ENCODE measurements at regions of chr1 and their contacts with region 1.

Region 1: GRCh38 chr1:150168960-150169601 is 19.4 kb downstream of the PLEKHO1 start:
- DNase-seq: peak; percentile 79 to 87 (median 82)
- ATAC-seq: peak; percentile 81
- H3K4me3 ChIP-seq: no peak overlapping the region
- H3K27ac ChIP-seq: no peak overlapping the region
- H3K4me1 ChIP-seq: peaks cover 7 to 27% of the 10 kb centered on the region in 2 experiments; a peak in 4 of 5 replicates
- H3K27me3 ChIP-seq: no peaks in the 10 kb centered on the region
- CTCF ChIP-seq: peak; percentile 91 to 93 (median 91)
- EP300 ChIP-seq: no peak
- POLR2A ChIP-seq: no peak
- RAD21 ChIP-seq: peak; percentile 89 to 97

Region 2: GRCh38 chr1:149962123-149962548 is 206.9 kb before region 1 on chr1:
- CTCF ChIA-PET with region 1: interaction called, 5 read pairs
- POLR2A ChIA-PET with region 1: no interaction called
- in situ Hi-C with region 1: loop called (anchors 5 kb)
- intact Hi-C with region 1: loop called (anchors 1 kb)
- DNase-seq: peak; percentile 52 to 79 (median 70)
- ATAC-seq: peak; percentile 96
- H3K4me3 ChIP-seq: no peak overlapping the region
- H3K27ac ChIP-seq: no peak overlapping the region
- H3K4me1 ChIP-seq: no peaks in the 10 kb centered on the region
- H3K27me3 ChIP-seq: no peaks in the 10 kb centered on the region
- CTCF ChIP-seq: peak; percentile 70 to 85 (median 77)
- EP300 ChIP-seq: no peak
- POLR2A ChIP-seq: no peak
- RAD21 ChIP-seq: peak; percentile 87 to 90

Region 3: DNA sequence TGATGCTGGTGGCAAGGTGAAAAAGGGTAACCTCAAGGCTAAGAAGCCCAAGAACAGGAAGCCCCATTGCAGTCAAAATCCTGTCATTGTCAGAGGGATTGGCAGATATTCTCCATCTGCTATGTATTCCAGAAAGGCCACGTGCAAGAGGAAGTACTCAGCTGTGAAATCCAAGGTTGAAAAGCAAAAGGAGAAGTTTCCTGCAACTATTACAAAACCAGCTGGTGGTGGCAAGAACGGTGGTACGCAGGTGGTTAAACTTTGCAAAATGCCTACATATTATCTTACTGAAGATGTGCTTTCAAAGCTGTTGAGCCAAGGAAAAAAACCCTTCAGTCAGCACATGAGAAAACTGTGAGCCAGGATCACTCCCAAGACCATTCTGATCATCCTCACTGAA is 115.2 kb before region 1 on chr1:
- CTCF ChIA-PET with region 1: no interaction called
- POLR2A ChIA-PET with region 1: no interaction called
- in situ Hi-C with region 1: no loop called
- intact Hi-C with region 1: loop called (anchors 5 kb)
- DNase-seq: no peak
- ATAC-seq: no peak
- H3K4me3 ChIP-seq: no peak overlapping the region
- H3K27ac ChIP-seq: no peak overlapping the region
- H3K4me1 ChIP-seq: no peaks in the 10 kb centered on the region; a peak in 1 of 5 replicates
- H3K27me3 ChIP-seq: no peaks in the 10 kb centered on the region
- CTCF ChIP-seq: no peak
- EP300 ChIP-seq: no peak
- POLR2A ChIP-seq: no peak
- RAD21 ChIP-seq: no peak

Region 4: DNA sequence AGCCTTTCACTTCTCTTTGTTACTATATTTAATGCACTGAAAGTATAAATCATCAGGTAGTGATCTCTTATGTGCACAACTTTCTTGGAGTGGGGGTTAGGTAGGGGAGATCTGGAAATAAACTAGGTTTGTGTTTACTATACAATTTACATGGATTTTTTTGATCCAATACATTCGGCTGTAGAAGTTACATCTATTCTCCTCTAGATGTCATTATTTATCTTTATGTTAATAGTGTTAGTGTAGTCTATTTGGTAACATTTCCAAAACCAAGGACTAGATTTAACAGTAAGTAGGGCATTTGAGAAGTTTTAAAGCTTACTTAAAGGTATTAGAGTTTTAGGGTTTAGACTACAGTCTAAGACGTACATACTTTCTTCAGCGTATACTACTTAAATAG is 96.1 kb before region 1 on chr1:
- CTCF ChIA-PET with region 1: interaction called, 32 read pairs
- POLR2A ChIA-PET with region 1: interaction called, 5 read pairs
- in situ Hi-C with region 1: loop called (anchors 5 kb)
- intact Hi-C with region 1: loop called (anchors 1 kb)
- DNase-seq: no peak
- ATAC-seq: peak; percentile 62
- H3K4me3 ChIP-seq: no peak overlapping the region
- H3K27ac ChIP-seq: no peak overlapping the region
- H3K4me1 ChIP-seq: peaks cover 0 to 15% of the 10 kb centered on the region in 2 experiments; a peak in 2 of 5 replicates
- H3K27me3 ChIP-seq: no peaks in the 10 kb centered on the region
- CTCF ChIP-seq: peak in 1 of 3 experiments; percentile 67; a peak in 4 of 6 replicates
- EP300 ChIP-seq: no peak
- POLR2A ChIP-seq: no peak
- RAD21 ChIP-seq: peak; percentile 69 to 79

Region 5: GRCh38 chr1:150089846-150090520 is 79.1 kb before region 1 on chr1:
- CTCF ChIA-PET with region 1: no interaction called
- POLR2A ChIA-PET with region 1: no interaction called
- in situ Hi-C with region 1: no loop called
- intact Hi-C with region 1: no loop called
- DNase-seq: no peak
- ATAC-seq: no peak
- H3K4me3 ChIP-seq: no peak overlapping the region
- H3K27ac ChIP-seq: no peak overlapping the region
- H3K4me1 ChIP-seq: no peaks in the 10 kb centered on the region
- H3K27me3 ChIP-seq: no peaks in the 10 kb centered on the region
- CTCF ChIP-seq: no peak
- EP300 ChIP-seq: no peak
- POLR2A ChIP-seq: no peak
- RAD21 ChIP-seq: no peak

Region 6: GRCh38 chr1:150186789-150187559 is 17.9 kb after region 1 on chr1:
- CTCF ChIA-PET with region 1: interaction called, 3 read pairs
- POLR2A ChIA-PET with region 1: interaction called, 9 read pairs
- in situ Hi-C with region 1: no loop called
- intact Hi-C with region 1: loop called (anchors 2 kb)
- DNase-seq: peak; percentile 62 to 76 (median 64)
- ATAC-seq: peak; percentile 89
- H3K4me3 ChIP-seq: no peak overlapping the region
- H3K27ac ChIP-seq: peak overlapping the region; percentile 73; the same call in 2 of the 3 replicates
- H3K4me1 ChIP-seq: peaks cover 4 to 12% of the 10 kb centered on the region in 2 experiments; a peak in 4 of 5 replicates
- H3K27me3 ChIP-seq: no peaks in the 10 kb centered on the region
- CTCF ChIP-seq: peak; percentile 29 to 72 (median 51); a peak in 5 of 6 replicates
- EP300 ChIP-seq: peak; percentile 67
- POLR2A ChIP-seq: no peak
- RAD21 ChIP-seq: peak; percentile 73 to 75

Region 7: GRCh38 chr1:150464422-150464826 is 295.3 kb after region 1 on chr1:
- CTCF ChIA-PET with region 1: no interaction called
- POLR2A ChIA-PET with region 1: no interaction called
- in situ Hi-C with region 1: no loop called
- intact Hi-C with region 1: no loop called
- DNase-seq: peak; percentile 67 to 84 (median 77)
- ATAC-seq: peak; percentile 85
- H3K4me3 ChIP-seq: no peak overlapping the region
- H3K27ac ChIP-seq: no peak overlapping the region
- H3K4me1 ChIP-seq: no peaks in the 10 kb centered on the region
- H3K27me3 ChIP-seq: no peaks in the 10 kb centered on the region
- CTCF ChIP-seq: peak; percentile 75 to 82 (median 81)
- EP300 ChIP-seq: no peak
- POLR2A ChIP-seq: no peak
- RAD21 ChIP-seq: peak; percentile 75 to 81

Region 8: GRCh38 chr1:150642296-150642695 is 473.2 kb after region 1 on chr1:
- CTCF ChIA-PET with region 1: no interaction called
- POLR2A ChIA-PET with region 1: no interaction called
- in situ Hi-C with region 1: no loop called
- intact Hi-C with region 1: no loop called
- DNase-seq: no peak
- ATAC-seq: no peak
- H3K4me3 ChIP-seq: no peak overlapping the region
- H3K27ac ChIP-seq: peak overlapping the region; percentile 29; the same call in 1 of the 3 replicates
- H3K4me1 ChIP-seq: peaks cover 2 to 6% of the 10 kb centered on the region in 2 experiments; a peak in 4 of 5 replicates
- H3K27me3 ChIP-seq: no peaks in the 10 kb centered on the region
- CTCF ChIP-seq: no peak
- EP300 ChIP-seq: no peak
- POLR2A ChIP-seq: no peak
- RAD21 ChIP-seq: no peak

Measured in K562 (cell line).